IMR-90 (cell line): ENCODE measurements at regions of chr14 and their contacts with region 1.

Region 1: DNA sequence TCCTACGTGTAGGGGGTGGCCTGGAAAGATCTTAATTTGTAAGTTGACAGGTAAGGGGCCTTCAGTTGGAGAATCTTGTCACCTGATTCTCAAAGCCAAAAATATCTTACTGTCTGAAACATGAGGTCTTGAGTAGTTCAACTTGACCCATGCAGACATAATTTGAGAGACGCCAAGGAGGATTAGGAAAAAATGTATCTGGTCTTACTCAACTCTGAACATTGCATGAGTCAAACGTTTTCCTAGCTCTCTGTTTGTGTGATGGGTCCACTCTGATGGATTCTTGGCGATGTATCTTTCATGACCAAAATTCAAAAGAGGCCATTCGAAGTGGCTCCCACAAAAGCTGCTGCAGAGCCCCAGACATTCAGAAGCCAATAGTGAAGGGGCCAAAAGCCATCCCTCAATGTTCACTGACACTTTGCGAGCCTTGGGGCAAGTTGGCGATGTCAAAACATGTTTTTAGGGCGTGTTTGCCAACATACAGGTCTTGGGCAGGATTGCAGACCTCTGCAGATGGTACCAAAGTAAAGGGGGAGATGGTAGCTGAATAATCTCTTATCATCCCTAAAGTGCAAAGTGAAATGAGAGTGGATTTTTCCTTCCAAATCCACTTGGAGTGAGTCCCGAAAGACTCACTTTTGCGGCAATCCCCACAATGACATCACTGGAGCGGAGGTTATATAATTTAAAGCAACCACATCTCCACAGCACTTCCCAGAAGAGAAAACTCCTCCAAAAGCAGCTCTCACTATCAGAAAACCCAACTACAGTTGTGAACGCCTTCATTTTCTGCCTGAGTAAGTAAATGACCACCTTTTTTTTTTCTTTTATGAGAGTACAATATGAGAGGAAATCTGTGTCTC is at the start of gene BDKRB1:
- DNase-seq: peak; percentile 96
- ATAC-seq: peak; percentile 24
- H3K4me3 ChIP-seq: peak within 1 kb of the TSS; percentile 59
- H3K27ac ChIP-seq: peak within 1 kb of the TSS; percentile 92
- H3K4me1 ChIP-seq: peaks cover 34% of the 10 kb centered on the region
- H3K27me3 ChIP-seq: no peaks in the 10 kb centered on the region
- CTCF ChIP-seq: no peak
- POLR2A ChIP-seq: peak; percentile 97
- RAD21 ChIP-seq: no peak
- total RNA-seq, gene BDKRB1: 51.4 and 56.5 TPM in 2 replicates

Region 2: GRCh38 chr14:94494085-94494484 is 1761.6 kb before region 1 on chr14:
- CTCF ChIA-PET with region 1: no interaction called
- POLR2A ChIA-PET with region 1: interaction called, 11 read pairs
- dilution Hi-C with region 1: no loop called
- in situ Hi-C with region 1: no loop called
- intact Hi-C with region 1: no loop called
- DNase-seq: no peak
- ATAC-seq: no peak
- H3K4me3 ChIP-seq: no peak overlapping the region
- H3K27ac ChIP-seq: no peak overlapping the region
- H3K4me1 ChIP-seq: no peaks in the 10 kb centered on the region
- H3K27me3 ChIP-seq: peaks cover 2% of the 10 kb centered on the region
- CTCF ChIP-seq: no peak
- POLR2A ChIP-seq: no peak
- RAD21 ChIP-seq: no peak

Region 3: DNA sequence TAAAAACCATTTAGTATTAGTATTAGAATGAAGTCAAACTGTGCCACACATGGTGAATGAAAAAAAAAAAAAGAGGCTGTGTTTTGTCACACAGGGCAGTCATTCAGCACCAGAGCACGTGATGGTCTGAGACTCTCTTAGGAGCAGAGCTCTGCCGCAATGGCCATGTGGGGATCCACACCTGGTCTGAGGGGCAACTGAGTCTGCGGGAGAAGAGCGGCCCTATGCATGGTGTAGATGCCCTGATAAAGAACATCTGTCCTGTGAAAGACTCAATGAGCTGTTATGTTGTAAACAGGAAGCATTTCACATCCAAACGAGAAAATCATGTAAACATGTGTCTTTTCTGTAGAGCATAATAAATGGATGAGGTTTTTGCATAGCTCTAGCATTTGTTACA is 11.9 kb before region 1 on chr14:
- CTCF ChIA-PET with region 1: no interaction called
- POLR2A ChIA-PET with region 1: no interaction called
- dilution Hi-C with region 1: no loop called
- in situ Hi-C with region 1: no loop called
- intact Hi-C with region 1: no loop called
- DNase-seq: peak; percentile 48
- ATAC-seq: no peak
- H3K4me3 ChIP-seq: no peak overlapping the region
- H3K27ac ChIP-seq: peak overlapping the region; percentile 54
- H3K4me1 ChIP-seq: peaks cover 16% of the 10 kb centered on the region
- H3K27me3 ChIP-seq: no peaks in the 10 kb centered on the region
- CTCF ChIP-seq: no peak
- POLR2A ChIP-seq: no peak
- RAD21 ChIP-seq: no peak